ENCODE measurements at regions of chr11 and their contacts with region 1.

Region 1: DNA sequence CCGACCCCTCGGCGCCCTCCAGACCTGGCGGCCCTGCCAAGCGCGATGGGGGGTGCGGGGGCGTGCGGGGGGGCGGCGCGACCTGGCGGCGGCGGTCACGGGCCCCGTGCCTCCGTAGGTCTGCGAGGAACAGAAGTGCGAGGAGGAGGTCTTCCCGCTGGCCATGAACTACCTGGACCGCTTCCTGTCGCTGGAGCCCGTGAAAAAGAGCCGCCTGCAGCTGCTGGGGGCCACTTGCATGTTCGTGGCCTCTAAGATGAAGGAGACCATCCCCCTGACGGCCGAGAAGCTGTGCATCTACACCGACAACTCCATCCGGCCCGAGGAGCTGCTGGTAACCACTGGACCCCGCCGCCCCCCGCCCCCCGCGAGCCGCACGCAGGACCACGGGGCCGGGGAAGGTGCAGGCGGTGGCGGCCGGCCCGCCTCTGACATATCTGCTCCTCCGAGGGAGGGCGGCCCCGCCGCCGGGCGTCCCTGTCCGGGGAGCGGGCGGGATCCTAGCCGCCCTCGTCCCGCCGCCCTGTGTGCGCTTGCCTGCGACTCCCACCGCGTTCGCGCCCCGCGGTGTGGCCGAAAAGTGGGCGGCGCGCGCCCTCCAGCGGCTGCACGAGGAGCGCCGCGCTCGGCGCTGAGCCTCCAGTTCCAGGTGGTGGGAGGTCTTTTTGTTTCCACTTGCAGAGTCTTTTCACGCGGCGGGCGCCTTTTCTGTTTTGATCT is 2.1 kb downstream of the CCND1 start:
- DNase-seq: no peak
- H3K4me3 ChIP-seq: peak overlapping the region; percentile 99
- CTCF ChIP-seq: peak; percentile 89

Region 2: DNA sequence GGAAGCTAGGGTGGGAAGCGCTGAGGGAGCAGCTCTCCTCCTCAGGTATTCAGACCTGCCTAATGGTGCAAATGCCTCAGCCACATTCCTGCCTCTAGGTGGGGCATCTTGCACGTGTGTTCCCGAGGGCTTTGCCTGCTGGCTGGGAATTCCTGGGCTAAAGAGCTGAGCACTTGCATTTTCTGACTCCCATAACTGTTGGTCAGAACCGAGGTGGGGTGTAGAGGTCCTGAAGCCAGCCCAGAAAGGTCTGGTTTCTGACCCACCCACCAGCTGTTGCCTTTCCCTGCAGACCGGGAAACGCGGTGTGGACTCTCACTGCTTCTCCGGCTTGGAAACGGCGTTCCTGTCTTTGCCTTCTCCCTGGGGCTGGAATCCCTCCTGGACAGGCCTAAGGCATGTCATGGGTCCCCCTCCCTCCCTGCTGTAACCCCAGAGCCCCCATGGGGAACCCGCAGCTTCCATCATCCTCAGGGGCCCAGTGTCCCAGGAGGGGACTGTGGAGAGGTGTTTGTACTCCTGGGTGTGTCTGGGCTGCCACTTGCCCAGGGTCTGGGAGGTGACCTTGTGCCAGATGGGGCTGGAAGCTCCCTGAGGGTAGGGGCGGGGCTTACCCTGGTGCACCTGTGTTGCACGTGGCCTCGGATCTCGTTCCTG is 511.3 kb before region 1 on chr11:
- CTCF ChIA-PET with region 1: interaction called, 38 read pairs
- POLR2A ChIA-PET with region 1: interaction called, 5 read pairs
- DNase-seq: peak; percentile 17
- H3K4me3 ChIP-seq: no peak overlapping the region
- CTCF ChIP-seq: peak; percentile 88

Region 3: GRCh38 chr11:69352715-69353325 is 290.3 kb before region 1 on chr11:
- CTCF ChIA-PET with region 1: no interaction called
- POLR2A ChIA-PET with region 1: interaction called, 12 read pairs
- DNase-seq: peak; percentile 76
- H3K4me3 ChIP-seq: no peak overlapping the region
- CTCF ChIP-seq: no peak

Region 4: GRCh38 chr11:69419662-69420395 is 223.2 kb before region 1 on chr11:
- CTCF ChIA-PET with region 1: interaction called, 5 read pairs
- POLR2A ChIA-PET with region 1: interaction called, 11 read pairs
- DNase-seq: no peak
- H3K4me3 ChIP-seq: no peak overlapping the region
- CTCF ChIP-seq: no peak

Region 5: GRCh38 chr11:69443138-69443967 is 199.7 kb before region 1 on chr11:
- CTCF ChIA-PET with region 1: interaction called, 4 read pairs
- POLR2A ChIA-PET with region 1: interaction called, 11 read pairs
- DNase-seq: no peak
- H3K4me3 ChIP-seq: peak overlapping the region; percentile 54
- CTCF ChIP-seq: no peak

Region 6: GRCh38 chr11:69540118-69540502 is 103.0 kb before region 1 on chr11:
- CTCF ChIA-PET with region 1: no interaction called
- POLR2A ChIA-PET with region 1: no interaction called
- DNase-seq: no peak
- H3K4me3 ChIP-seq: no peak overlapping the region
- CTCF ChIP-seq: no peak

Region 7: DNA sequence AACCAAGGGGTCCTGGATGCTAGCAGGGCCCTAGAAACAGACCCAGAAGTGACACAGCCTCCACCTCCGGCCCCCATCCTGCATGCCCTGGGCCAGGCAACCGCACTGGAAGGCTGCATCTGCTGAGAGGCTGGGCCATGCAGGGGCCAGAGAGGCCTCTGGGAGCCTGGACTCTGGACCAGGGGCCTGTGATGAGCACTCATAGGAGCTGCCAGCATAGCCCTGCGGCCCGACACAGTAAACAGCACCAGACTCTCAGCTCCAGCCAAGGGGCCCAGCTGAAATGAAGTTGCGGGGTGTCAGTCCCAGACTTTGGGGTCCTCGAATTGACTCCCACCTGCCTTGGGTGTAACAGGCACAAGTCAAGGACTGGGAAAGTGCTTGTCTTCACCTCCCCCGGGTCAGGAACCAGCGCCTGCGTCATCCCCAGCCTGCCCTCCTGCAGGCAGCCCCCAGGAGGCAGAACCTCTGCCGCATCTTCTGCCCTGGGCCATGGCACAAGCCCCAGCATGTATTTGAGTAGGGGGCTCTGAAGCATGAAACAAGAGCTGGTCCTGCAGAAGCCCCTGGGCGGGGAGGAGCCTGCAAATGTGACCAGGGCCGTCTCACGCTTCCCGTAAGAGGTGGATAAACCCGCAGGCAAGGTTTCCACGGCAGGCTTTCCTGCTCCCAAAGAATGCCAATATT is 27.4 kb before region 1 on chr11:
- CTCF ChIA-PET with region 1: no interaction called
- POLR2A ChIA-PET with region 1: no interaction called
- DNase-seq: no peak
- H3K4me3 ChIP-seq: no peak overlapping the region
- CTCF ChIP-seq: no peak

Region 8: GRCh38 chr11:69654569-69655327 is 11.7 kb after region 1 on chr11:
- CTCF ChIA-PET with region 1: interaction called, 23 read pairs
- POLR2A ChIA-PET with region 1: interaction called, 8 read pairs
- DNase-seq: no peak
- H3K4me3 ChIP-seq: no peak overlapping the region
- CTCF ChIP-seq: no peak

Region 9: DNA sequence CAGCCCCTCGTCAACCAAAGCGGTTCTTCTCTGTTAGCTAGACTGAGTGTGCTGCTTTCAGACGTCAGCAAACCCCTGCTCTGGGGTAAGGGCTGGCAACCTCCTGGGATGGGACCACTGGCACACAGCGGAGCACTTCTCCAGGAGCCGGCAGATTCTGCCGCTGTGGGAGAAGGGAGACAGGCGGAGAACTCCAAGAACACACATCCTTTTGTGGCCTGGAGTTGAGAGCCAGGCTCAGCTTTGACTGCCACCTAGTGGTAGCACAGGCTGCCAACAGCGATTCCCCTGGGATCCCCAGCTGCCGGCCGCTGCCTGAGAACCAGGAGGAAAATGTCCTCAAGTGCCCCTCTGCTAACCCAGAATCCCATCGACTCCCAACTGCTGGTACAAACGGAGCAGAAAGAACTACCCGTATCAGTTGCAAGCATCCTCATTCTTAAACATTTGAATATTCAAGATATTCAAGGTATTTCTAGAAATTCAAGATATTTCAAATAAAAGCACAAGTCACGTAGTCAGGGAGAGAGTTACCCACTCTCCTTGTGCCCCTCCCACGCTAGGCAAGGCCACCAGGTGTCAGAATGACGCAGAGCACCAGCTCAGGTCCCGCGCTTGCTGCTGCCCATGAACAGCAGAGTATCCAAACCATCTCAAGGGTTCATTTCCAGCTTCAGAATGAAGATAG is 27.2 kb after region 1 on chr11:
- CTCF ChIA-PET with region 1: interaction called, 19 read pairs
- POLR2A ChIA-PET with region 1: interaction called, 4 read pairs
- DNase-seq: peak; percentile 31
- H3K4me3 ChIP-seq: no peak overlapping the region
- CTCF ChIP-seq: peak; percentile 96

Measured in AG04449 (cell line).